GM13976 (cell line): ENCODE measurements at regions of chr5 and their contacts with region 1.

Region 1: DNA sequence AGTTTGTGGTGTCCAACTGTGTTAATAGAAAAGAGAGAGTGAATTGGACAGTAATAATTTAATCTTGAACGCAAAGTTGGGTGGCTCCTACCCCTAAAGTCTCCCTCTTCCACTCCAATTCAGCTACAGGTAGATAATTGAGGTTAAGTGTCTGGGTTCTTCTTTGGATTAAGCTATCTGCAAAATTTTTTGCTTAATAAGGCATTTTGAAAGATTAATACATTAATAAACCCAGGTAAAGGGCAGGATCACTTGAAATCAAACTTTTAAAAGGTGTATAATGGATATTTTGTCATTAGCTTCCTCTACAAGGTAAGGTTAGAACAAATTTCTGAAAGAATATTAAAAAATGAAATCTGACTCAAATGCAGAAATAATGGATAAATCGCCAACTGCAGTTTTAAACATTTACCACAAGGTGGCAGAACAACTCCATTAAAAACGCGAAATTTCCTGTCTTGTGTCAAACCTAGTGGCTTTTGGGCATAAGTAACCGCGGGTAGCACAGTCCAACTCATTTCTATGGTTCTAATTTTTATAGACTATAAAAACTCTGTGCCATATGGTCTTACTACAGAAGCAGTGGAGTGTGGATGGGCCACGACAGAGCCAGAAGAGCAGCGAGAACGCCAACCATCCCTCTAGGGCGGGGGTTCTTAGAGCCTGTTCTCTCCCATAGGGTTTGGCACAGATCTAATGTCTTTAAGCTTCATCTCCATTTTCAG is 276.5 kb downstream of the ARHGEF28 start:
- DNase-seq: peak; percentile 49
- CTCF ChIP-seq: peak; percentile 64

Region 2: DNA sequence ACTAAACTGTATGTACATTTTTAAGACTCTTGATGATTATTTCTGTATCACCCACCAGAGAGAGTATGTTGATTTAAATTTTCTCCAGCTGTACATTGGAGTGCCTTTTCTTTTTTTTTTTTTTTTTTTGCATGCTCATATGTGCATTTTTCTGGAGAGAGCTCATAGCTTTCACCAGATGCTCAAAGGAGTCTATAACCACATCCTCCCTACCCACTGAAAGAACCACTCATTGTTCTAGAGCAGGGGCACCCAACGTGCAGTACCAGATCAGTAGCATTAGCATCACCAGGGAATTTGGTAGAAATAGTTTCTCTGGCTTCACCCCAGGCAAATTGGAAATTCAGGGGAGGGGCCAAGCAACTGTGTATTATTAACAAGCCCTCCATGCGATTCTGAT is 836.0 kb before region 1 on chr5:
- in situ Hi-C with region 1: no loop called
- DNase-seq: no peak
- CTCF ChIP-seq: no peak

Region 3: DNA sequence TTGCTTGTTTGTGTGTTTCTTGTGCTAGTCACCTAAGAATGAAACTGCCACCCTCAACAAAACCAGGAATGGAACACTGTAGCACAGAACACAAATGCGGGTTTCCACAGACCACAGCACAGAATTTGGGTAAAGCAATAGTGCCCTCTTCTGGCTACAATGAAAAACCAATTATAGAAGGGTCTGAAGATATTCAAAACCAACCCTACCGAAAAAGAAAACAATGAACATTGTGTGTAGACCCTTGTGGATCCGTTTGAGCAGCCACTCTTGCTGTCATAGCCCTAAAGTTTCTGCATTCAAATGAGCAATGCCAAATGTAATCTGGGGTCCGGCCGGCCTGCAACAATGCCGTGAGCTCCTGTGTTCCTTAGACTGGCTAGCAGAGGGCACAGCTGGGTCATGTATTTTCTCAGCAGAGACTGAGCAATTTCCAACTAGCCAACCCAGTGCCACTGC is 746.4 kb after region 1 on chr5:
- in situ Hi-C with region 1: loop called (anchors 5 kb)
- DNase-seq: peak; percentile 69
- CTCF ChIP-seq: peak; percentile 58

Region 4: DNA sequence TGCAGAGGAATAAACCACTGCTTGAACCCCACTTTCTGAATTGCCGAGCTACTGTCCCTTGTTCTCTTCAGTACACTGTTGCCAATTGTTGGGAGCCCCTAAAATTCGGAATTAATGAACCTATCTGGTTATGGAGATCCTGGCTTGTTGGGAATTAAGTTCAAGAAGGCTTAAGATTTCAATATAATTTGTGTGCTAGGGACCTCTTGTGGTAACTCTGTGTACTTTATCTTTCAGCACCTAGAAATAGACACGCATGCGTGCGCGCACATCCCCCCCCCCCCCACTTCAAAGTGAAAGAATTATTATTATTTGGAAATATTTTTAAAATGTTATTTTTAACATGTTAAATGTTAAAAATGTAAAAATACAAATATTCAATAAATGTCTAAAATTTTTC is 1017.0 kb after region 1 on chr5:
- in situ Hi-C with region 1: loop called (anchors 25 kb)
- DNase-seq: peak; percentile 61
- CTCF ChIP-seq: peak; percentile 24